Activated T-helper 2 cell treated with anti-CD3 and anti-CD28 coated beads, Interferon-gamma antibody, Interleukin-2, Interleukin-4, amounts not matched to agents 10 μg/mL and 5 μg/mL and 100 μg/mL, durations not matched to agents 14 hours and 24 hours and 36 hours (primary cell): ENCODE measurements at regions of chr22 and their contacts with region 1.

Region 1: DNA sequence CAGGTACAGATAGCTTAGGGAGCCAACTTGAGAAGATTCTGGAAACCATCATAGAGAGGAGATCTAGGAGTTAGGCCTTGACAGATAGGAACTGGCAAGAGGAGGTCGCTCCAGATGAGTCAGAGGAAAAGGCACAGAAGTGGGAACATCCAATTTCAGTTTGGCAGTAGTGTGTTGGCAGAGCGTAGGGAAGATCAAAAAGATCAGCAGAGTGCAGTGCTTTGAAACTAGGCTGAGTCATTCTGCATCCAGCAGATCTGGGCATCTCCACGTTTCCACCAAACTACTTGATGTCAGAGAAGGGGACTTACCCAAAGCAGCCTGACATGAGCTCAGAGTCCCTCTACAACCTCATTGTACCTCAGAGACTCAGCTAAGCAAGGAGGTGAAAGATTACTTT is 58.5 kb downstream of the GAB4 start:
- DNase-seq: no peak
- H3K4me3 Mint-ChIP-seq: no peak overlapping the region
- H3K27ac Mint-ChIP-seq: peak overlapping the region; percentile 28
- H3K4me1 Mint-ChIP-seq: peaks cover 12% of the 10 kb centered on the region
- H3K27me3 Mint-ChIP-seq: no peaks in the 10 kb centered on the region

Region 2: DNA sequence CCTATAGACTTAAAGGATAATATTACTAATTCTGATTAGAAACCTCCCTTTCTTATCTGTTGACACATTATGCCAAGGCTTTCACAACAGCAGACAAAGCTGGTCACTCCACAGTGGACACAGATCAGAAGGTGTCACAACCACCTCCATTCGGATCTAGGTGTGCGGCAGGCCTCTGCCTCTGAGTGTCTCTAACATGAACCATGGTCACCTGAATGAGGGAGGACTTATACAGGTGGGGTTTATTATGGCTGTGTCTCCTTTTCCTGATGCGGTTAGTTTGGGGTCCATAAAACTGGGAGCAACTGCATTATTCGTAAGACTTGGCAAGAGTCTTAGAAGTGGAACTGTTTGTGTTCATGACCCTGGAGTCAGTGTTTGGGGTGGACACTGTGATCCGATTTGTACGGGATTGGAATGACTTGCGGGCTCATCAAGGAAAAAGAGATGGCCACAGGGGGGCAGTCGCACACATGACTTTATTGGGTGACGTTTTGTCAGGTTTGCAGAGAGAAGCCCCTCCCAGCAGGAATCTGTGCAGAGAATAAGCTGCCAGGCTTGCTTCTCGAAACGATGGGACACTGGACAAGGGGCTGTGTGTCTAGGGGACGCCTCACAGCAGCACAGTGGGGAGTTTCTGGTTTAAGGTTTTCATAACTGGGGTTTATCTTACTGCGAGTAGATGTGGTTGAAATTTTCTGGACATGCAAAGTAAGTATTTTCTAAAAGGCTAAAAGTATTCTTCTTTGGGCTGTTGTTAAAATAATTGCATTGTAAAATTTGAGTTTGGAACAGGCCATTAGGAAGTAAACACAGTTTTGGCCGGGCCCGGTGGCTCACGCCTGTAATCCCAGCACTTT is 32.2 kb before region 1 on chr22:
- intact Hi-C with region 1: no loop called
- DNase-seq: peak; percentile 38
- H3K4me3 Mint-ChIP-seq: no peak overlapping the region
- H3K27ac Mint-ChIP-seq: no peak overlapping the region
- H3K4me1 Mint-ChIP-seq: peaks cover 16% of the 10 kb centered on the region
- H3K27me3 Mint-ChIP-seq: peaks cover 2% of the 10 kb centered on the region

Region 3: DNA sequence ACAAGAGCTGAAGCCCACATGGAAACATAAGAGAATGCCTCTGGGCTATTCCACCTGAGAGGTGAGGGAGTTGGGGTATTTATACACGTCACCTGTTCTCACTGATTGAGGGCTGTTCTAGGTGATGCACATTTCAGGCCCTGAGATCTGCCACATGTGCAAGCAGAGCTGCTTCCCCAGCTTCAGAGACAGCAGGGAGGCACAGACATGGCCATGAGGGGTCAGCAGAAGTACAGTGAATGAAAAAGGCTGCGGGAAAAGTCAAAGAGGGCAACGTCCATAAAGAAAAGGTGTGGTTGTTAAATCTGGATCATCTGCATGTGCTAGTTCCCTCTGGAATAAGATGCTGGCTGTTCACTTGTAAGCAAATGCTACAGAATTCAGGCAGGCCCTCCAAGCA is 17.0 kb before region 1 on chr22:
- intact Hi-C with region 1: loop called (anchors 2 kb)
- DNase-seq: no peak
- H3K4me3 Mint-ChIP-seq: no peak overlapping the region
- H3K27ac Mint-ChIP-seq: no peak overlapping the region
- H3K4me1 Mint-ChIP-seq: peaks cover 9% of the 10 kb centered on the region
- H3K27me3 Mint-ChIP-seq: peaks cover 5% of the 10 kb centered on the region